Natural killer cell (primary cell): ENCODE measurements at regions of chr7 and their contacts with region 1.

Region 1: GRCh38 chr7:108497082-108497725 is 28.7 kb downstream of the PNPLA8 start:
- DNase-seq: peak in 1 of 2 donors; percentile 75
- ATAC-seq: peak; percentile 71 to 78 (median 75)
- H3K4me3 ChIP-seq: no peak overlapping the region
- H3K4me3 Mint-ChIP-seq: no peak overlapping the region
- H3K27ac ChIP-seq: no peak overlapping the region
- H3K27ac Mint-ChIP-seq: no peak overlapping the region
- H3K4me1 ChIP-seq: no peaks in the 10 kb centered on the region
- H3K4me1 Mint-ChIP-seq: peaks cover 7% of the 10 kb centered on the region in 2 donors
- H3K27me3 ChIP-seq: no peaks in the 10 kb centered on the region
- H3K27me3 Mint-ChIP-seq: no peaks in the 10 kb centered on the region
- CTCF ChIP-seq: peak; percentile 98

Region 2: DNA sequence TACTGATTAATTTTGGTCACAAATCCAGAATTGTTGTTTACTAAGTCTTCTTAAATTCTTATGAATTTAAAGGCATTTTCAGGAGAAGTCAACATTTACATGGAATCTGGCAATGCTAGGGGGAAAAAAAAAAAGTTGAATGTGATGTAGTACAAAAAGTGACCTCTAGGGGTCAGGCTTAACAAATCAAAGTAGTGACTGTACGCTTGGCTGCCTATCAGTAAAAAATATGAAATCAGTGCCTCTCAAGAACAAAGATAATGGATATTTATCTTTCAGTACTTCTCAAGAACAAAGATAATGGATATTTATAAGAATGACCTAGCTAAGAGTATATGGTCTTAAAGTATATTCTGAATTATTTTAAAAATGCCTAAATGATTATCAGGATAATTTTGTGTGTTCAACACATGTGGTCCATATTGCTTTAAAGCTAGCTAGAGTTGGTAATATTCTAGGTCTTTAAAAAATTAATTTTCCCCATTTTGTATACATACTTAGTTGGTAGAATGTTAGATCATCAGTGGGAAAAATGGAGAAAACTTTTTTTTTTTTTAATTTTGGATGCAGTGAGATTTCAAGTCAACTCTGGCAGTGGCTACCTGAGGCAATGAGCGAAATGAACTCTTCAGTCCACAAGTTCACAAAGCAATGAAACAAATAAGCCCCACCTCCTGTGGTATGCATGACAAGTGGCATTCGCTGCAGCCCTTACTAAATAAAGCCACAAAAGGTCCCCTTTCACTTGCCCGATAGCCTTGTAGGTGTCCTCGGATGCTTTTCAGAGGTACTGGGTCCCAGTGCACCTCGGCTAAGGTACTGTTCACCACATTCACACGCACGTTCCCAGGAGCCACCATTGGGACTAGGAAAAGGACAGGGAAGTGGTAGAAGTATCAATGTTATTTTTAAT is 315.9 kb before region 1 on chr7:
- intact Hi-C with region 1: loop called (anchors 1 kb)
- DNase-seq: peak in 1 of 2 donors; percentile 68
- ATAC-seq: peak in 2 of 3 donors; percentile 64 to 75
- H3K4me3 ChIP-seq: no peak overlapping the region
- H3K4me3 Mint-ChIP-seq: no peak overlapping the region
- H3K27ac ChIP-seq: no peak overlapping the region
- H3K27ac Mint-ChIP-seq: no peak overlapping the region
- H3K4me1 ChIP-seq: no peaks in the 10 kb centered on the region
- H3K4me1 Mint-ChIP-seq: no peaks in the 10 kb centered on the region
- H3K27me3 ChIP-seq: no peaks in the 10 kb centered on the region
- H3K27me3 Mint-ChIP-seq: peaks cover 8 to 27% of the 10 kb centered on the region in 2 donors
- CTCF ChIP-seq: peak; percentile 86

Region 3: DNA sequence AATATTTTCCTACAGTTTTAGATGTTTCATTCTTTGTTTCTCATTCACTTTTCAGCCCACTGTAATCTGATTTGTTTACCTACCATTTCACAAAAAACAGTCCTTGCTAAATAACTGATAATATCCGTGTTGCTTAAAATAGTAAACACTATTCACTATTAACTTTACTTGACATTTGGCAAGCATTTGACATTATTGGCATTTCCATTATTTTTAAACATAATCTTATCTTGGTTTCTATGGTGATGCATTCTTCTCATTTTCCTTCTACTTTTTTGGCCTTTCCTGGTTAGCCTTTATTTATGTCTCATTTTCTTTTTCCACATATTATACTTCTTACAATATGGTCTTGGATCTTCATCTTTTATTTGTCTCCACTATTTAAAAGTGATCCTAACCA is 787.7 kb after region 1 on chr7:
- intact Hi-C with region 1: no loop called
- DNase-seq: no peak
- ATAC-seq: no peak
- H3K4me3 ChIP-seq: no peak overlapping the region
- H3K4me3 Mint-ChIP-seq: no peak overlapping the region
- H3K27ac ChIP-seq: no peak overlapping the region
- H3K27ac Mint-ChIP-seq: no peak overlapping the region
- H3K4me1 ChIP-seq: no peaks in the 10 kb centered on the region
- H3K4me1 Mint-ChIP-seq: no peaks in the 10 kb centered on the region
- H3K27me3 ChIP-seq: no peaks in the 10 kb centered on the region
- H3K27me3 Mint-ChIP-seq: no peaks in the 10 kb centered on the region
- CTCF ChIP-seq: no peak